ENCODE measurements at regions of chr7 and their contacts with region 1.

Region 1: GRCh38 chr7:37352974-37353948 is 95.4 kb downstream of the ELMO1 start:
- DNase-seq: peak; percentile 89 to 95 (median 92)
- H3K4me3 ChIP-seq: peak overlapping the region; percentile 61 to 92 (median 82)
- H3K27ac ChIP-seq: peak overlapping the region; percentile 93 to 97
- H3K4me1 ChIP-seq: peaks cover 36 to 90% (median 80%) of the 10 kb centered on the region in 4 experiments
- H3K27me3 ChIP-seq: no peaks in the 10 kb centered on the region

Region 2: DNA sequence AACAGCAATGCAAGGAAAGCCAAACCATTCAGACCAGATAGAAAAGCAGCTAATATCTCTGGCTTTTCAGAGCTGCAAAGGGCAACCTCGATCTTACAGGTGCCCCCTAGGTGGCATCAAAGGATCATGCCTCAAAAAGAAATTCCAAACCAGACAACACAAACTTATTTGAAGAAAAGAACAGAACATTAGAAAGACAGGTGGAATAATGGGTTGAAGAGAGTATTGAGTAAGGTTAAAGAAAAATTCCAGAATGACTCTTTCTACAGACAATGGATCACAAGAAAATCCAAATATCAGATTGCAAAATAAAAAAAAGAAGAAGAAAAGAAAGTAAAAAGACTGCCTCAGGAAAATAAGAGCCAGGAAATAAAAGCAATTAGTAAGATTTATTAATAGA is 118.3 kb before region 1 on chr7:
- CTCF ChIA-PET with region 1: interaction called, 55 read pairs
- POLR2A ChIA-PET with region 1: no interaction called
- DNase-seq: peak; percentile 51 to 72 (median 64)
- H3K4me3 ChIP-seq: no peak overlapping the region
- H3K27ac ChIP-seq: no peak overlapping the region
- H3K4me1 ChIP-seq: peaks cover 0 to 16% (median 6%) of the 10 kb centered on the region in 4 experiments
- H3K27me3 ChIP-seq: no peaks in the 10 kb centered on the region

Region 3: DNA sequence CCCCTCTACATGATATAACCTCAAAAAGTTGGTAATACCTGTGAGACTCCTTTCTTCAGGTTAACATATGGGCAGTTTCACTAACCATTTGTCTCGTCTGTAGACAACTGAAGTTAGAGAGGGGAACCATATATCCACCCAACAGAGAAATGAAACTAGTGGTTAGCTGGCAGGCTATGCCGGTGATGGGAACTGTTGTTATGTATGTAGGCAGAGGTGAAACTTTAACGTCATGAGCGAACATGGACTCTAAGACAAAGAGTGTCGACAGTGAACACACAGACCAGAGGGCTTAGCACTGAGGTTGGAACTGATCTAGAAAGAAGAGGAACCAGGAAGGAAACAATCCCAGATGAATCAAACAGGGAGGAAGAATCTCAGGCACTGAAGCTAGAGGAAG is 17.0 kb before region 1 on chr7:
- CTCF ChIA-PET with region 1: interaction called, 24 read pairs
- POLR2A ChIA-PET with region 1: no interaction called
- DNase-seq: no peak
- H3K4me3 ChIP-seq: no peak overlapping the region
- H3K27ac ChIP-seq: no peak overlapping the region
- H3K4me1 ChIP-seq: peaks cover 18 to 53% (median 30%) of the 10 kb centered on the region in 4 experiments
- H3K27me3 ChIP-seq: no peaks in the 10 kb centered on the region

Region 4: DNA sequence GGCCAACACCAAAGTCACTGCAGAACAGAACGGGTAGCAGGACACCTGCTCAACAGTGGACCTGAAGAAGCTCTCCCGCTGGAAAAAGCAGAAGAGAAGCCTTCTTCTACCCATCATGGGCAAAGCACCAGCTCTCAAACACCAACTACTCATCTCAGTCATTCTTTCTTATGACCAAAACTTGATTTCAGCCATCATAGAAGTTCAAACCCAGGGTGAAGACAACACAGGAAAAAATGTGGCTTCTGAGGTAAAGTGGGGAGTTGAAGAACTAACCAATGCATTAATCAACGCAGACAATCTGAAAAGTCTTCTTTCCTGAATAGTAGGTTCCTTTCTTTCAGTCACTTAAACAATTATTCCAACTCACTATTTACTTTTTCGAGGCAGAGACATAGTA is 12.1 kb after region 1 on chr7:
- CTCF ChIA-PET with region 1: interaction called, 11 read pairs
- POLR2A ChIA-PET with region 1: interaction called, 3 read pairs
- DNase-seq: peak in 2 of 3 donors; percentile 63 to 66
- H3K4me3 ChIP-seq: no peak overlapping the region
- H3K27ac ChIP-seq: no peak overlapping the region
- H3K4me1 ChIP-seq: peaks cover 7 to 42% (median 16%) of the 10 kb centered on the region in 4 experiments
- H3K27me3 ChIP-seq: no peaks in the 10 kb centered on the region

Region 5: DNA sequence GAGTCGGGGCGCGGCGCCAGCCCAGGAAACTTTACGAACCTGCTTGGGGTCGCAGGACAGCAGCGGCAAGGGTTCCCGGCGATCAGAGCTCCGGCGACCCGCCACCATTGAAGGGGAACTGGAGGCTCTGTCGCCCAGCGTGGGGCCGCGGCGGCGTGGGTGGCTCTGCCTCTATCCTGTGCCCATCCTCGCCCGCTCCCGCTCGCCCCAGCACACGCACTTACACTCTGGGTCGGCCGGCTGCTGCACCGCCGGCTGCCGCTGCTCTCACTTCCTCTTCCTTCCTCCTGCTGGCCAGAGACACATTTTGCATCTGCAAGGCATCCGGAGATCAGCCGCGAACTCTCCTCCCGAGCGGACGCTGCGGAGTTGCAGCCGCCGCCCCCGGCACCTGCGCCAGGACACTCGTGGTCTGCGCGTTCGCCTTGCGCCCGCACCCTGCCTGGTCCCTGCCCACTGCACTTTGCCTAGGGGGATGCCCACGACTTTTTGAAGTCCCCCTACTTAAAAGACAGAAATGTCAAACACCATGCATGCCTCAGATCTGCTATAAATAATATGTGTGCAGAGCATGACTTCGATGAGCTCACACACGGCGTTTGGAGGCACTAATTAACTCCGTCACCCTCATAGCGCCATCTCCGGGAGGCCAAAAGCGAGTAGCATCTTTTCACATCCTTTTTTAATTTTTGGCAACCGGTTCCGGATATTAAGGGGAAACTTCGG is 95.5 kb after region 1 on chr7 and contains the start of gene ELMO1:
- CTCF ChIA-PET with region 1: interaction called, 64 read pairs
- POLR2A ChIA-PET with region 1: interaction called, 5 read pairs
- DNase-seq: peak; percentile 92 to 97 (median 95)
- H3K4me3 ChIP-seq: peak within 1 kb of the TSS; percentile 83 to 91 (median 86)
- H3K27ac ChIP-seq: peak within 1 kb of the TSS; percentile 62 to 80
- H3K4me1 ChIP-seq: peaks cover 13 to 36% (median 27%) of the 10 kb centered on the region in 4 experiments
- H3K27me3 ChIP-seq: no peaks in the 10 kb centered on the region

Measured in common myeloid progenitor, CD34-positive (primary cell).